ENCODE measurements at regions of chr2 and their contacts with region 1.

Region 1: GRCh38 chr2:230435431-230435830 is 19.4 kb downstream of the SP100 start:
- DNase-seq: no peak
- H3K4me3 ChIP-seq: no peak overlapping the region
- H3K27ac ChIP-seq: no peak overlapping the region
- H3K4me1 ChIP-seq: peaks cover 22% of the 10 kb centered on the region
- CTCF ChIP-seq: no peak

Region 2: DNA sequence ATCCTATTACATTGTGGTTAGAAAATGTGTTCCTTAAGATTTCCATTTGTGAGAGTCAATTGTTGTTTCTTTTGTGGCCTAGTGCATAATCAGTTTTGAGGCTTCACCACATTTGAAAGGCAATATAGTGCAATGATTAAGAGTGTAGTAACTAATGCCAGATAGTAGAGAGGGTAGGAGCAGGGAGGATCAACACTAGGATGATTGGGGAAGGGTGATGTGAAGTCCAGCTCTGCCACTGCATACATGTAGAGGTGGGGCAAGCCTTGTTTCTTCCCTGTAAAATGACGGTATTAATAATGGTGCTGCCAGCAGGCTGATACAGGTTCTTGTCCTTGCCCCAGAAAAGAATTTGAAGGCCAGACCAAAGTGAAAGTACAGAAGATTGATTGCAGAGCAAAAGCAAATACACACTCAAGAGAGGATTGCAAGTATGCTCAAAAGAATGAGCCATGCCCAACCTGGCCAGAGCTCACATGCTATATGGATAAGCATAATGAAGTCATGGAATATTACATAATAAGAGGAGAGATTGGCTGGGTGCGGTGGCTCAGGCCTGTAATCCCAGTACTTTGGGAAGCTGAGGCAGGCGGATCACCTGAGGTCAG is 11.5 kb before region 1 on chr2:
- CTCF ChIA-PET with region 1: interaction called, 12 read pairs
- POLR2A ChIA-PET with region 1: interaction called, 5 read pairs
- intact Hi-C with region 1: no loop called
- DNase-seq: no peak
- H3K4me3 ChIP-seq: no peak overlapping the region
- H3K27ac ChIP-seq: no peak overlapping the region
- H3K4me1 ChIP-seq: peaks cover 9% of the 10 kb centered on the region
- CTCF ChIP-seq: no peak

Measured in OCI-LY7 (cell line).